Calu3 (cell line): ENCODE measurements at regions of chr20 and their contacts with region 1.

Region 1: GRCh38 chr20:18263723-18264122 is 24.6 kb upstream of the ZNF133 start:
- DNase-seq: peak; percentile 59
- H3K4me3 Mint-ChIP-seq: no peak overlapping the region
- H3K27ac Mint-ChIP-seq: peak overlapping the region; percentile 33
- H3K4me1 Mint-ChIP-seq: no peaks in the 10 kb centered on the region
- H3K27me3 Mint-ChIP-seq: no peaks in the 10 kb centered on the region
- CTCF ChIP-seq: no peak

Region 2: DNA sequence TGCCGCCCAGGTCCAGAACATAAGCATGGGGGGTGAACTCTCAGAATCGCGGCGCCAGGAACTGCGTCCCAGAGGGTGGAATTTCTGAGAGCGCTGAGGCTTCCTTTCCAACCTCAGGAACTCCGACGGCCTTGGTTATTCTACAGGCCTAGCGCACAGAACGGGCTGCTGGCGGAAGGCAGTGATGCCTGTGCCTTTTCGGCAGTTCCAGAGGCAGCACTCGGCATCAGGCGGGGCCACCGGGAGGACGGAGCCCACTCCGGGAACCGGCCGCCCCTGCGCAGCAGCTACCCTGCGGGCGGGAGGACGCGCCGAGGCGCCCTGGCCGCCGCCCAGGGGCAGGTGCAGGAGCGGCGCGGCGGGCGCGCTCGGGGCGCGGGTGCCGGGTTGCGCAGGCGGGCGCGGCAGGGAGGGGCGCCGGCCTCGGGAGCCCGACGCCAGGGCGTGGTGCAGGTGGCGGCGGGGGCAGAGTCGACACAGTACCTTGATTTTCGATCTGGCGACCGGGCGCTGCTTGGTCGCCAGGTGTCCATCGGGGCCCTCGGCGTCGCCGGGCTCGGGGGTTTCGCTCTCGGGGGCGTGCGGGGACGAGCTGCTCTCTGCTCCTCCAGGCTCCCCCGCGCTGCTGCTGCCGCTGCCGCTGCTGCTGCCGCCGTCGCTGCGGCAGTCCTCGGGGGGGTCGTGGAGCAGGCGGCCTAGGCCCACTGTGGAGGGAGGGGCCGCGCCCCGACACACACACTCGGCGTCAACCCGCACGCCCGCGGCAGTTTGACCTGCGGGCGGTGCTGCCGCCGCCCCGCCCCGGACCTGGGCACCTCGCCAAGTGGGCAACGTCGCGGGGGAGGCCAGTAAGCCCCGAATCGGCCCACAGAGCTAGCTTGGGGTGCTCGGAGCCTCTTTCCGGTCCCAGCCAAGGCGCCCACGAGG is 207.3 kb before region 1 on chr20:
- CTCF ChIA-PET with region 1: no interaction called
- intact Hi-C with region 1: loop called (anchors 5 kb)
- DNase-seq: peak; percentile 33
- H3K4me3 Mint-ChIP-seq: peak overlapping the region; percentile 68
- H3K27ac Mint-ChIP-seq: no peak overlapping the region
- H3K4me1 Mint-ChIP-seq: no peaks in the 10 kb centered on the region
- H3K27me3 Mint-ChIP-seq: no peaks in the 10 kb centered on the region
- CTCF ChIP-seq: no peak

Region 3: DNA sequence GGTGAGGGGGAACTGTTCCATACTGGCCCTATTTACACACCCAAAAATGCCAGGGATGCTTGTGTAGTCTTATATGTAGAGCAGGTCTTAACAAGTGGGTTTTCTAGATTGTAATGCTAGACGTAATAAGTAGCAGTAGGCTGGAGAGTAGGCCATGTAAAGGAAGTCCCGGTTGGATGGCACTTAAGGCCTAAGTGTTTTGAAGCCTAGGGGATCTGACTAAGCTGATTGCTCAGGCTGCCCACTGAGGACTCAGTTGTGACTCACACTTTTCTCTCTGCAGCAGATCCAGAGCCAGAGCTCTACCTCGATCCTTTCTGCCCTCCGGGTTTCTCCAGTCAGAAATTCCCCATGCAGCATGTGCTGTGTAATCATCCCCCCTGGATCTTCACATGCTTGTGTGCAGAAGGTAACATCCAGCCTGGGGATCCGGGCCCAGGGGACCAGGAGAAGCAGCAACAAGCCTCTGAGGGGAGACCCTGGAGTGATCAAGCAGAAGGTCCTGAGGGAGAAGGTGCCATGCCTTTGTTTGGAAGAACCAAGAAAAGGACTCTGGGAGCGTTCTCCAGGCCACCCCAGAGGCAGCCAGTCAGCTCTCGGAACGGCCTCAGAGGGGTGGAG is 51.2 kb after region 1 on chr20:
- CTCF ChIA-PET with region 1: no interaction called
- intact Hi-C with region 1: no loop called
- DNase-seq: no peak
- H3K4me3 Mint-ChIP-seq: no peak overlapping the region
- H3K27ac Mint-ChIP-seq: no peak overlapping the region
- H3K4me1 Mint-ChIP-seq: no peaks in the 10 kb centered on the region
- H3K27me3 Mint-ChIP-seq: no peaks in the 10 kb centered on the region
- CTCF ChIP-seq: no peak